ENCODE measurements at regions of chrX and their contacts with region 1.

Region 1: GRCh38 chrX:150715184-150715583 is 22.0 kb downstream of the MTMR1 start:
- DNase-seq: no peak
- H3K4me3 ChIP-seq: no peak overlapping the region
- H3K27ac ChIP-seq: no peak overlapping the region
- H3K4me1 ChIP-seq: peaks cover 0 to 2% of the 10 kb centered on the region in 2 donors
- H3K27me3 ChIP-seq: no peaks in the 10 kb centered on the region
- CTCF ChIP-seq: no peak

Region 2: DNA sequence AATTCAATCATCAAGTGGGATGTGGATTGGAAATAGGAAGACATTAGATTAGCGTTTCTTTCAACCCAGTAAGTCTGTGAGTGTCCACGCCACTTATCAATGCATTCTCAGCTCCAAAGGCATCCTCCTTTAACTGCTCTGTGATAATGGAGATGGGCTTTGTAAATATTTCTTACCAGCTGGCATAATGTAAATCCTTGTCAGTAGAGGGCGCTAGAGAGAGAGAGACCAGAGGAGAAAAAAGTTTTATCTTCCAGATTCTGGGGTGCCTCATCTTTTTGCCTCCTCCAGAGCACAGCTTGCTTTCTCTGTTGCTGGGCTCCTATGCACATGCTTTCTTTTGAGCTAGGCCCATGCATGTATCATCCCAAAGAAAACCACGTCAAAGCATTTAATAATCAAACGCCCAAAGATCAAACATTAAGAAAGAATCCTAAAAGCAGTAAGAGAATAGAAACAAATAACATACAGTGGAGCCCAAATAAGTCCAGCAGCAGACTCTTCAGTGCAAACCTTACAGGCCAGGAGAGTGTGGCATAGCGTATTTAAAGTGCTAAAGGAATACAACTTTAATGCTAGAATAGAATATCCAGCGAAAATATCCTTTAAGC is 31.5 kb before region 1 on chrX:
- intact Hi-C with region 1: loop called (anchors 1 kb)
- DNase-seq: no peak
- H3K4me3 ChIP-seq: no peak overlapping the region
- H3K27ac ChIP-seq: no peak overlapping the region
- H3K4me1 ChIP-seq: no peaks in the 10 kb centered on the region
- H3K27me3 ChIP-seq: no peaks in the 10 kb centered on the region
- CTCF ChIP-seq: peak; percentile 36 to 60 (median 37)

Region 3: GRCh38 chrX:151370906-151371305 is 655.7 kb after region 1 on chrX:
- intact Hi-C with region 1: no loop called
- DNase-seq: no peak
- H3K4me3 ChIP-seq: no peak overlapping the region
- H3K27ac ChIP-seq: no peak overlapping the region
- H3K4me1 ChIP-seq: no peaks in the 10 kb centered on the region
- H3K27me3 ChIP-seq: no peaks in the 10 kb centered on the region
- CTCF ChIP-seq: no peak

Measured in ascending aorta (tissue), 2 donors.